WTC11 (cell line): ENCODE measurements at regions of chr7 and their contacts with region 1.

Region 1: GRCh38 chr7:106009403-106010226 is 46.6 kb downstream of the CDHR3 start:
- DNase-seq: peak; percentile 95
- ATAC-seq: peak; percentile 94
- H3K4me3 Mint-ChIP-seq: peak overlapping the region; percentile 56
- H3K27ac Mint-ChIP-seq: peak overlapping the region; percentile 98
- H3K4me1 Mint-ChIP-seq: peaks cover 20% of the 10 kb centered on the region
- H3K27me3 Mint-ChIP-seq: peaks cover 30% of the 10 kb centered on the region
- CTCF ChIP-seq: peak; percentile 97

Region 2: DNA sequence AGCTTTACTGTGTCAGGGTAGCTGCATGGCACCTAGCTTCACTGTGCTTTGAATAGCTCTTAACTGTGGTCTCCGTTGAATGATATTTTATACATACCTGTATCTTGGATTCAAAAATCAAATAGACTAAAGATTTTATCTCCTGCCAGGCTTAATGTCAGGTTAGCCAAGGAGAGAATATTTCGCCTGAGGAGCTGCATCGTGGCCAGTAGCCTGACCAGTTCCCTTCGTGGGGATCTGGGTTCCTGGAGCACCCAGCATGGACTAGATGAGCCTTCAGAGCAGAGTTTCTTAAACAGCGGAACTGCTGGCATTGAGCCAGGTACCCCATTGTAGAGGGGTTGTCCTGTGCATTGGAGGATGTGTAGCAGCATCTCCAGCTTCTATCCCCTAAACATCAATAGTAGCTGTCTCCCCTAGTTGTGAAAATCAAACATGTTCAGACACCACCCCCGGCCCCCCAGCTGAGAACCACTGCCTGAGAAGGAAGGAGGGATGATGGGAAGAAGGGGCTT is 10.4 kb before region 1 on chr7:
- CTCF ChIA-PET with region 1: interaction called, 13 read pairs
- POLR2A ChIA-PET with region 1: no interaction called
- DNase-seq: no peak
- ATAC-seq: no peak
- H3K4me3 Mint-ChIP-seq: no peak overlapping the region
- H3K27ac Mint-ChIP-seq: no peak overlapping the region
- H3K4me1 Mint-ChIP-seq: peaks cover 20% of the 10 kb centered on the region
- H3K27me3 Mint-ChIP-seq: peaks cover 5% of the 10 kb centered on the region; the same call in 1 of the 2 replicates
- CTCF ChIP-seq: no peak

Region 3: DNA sequence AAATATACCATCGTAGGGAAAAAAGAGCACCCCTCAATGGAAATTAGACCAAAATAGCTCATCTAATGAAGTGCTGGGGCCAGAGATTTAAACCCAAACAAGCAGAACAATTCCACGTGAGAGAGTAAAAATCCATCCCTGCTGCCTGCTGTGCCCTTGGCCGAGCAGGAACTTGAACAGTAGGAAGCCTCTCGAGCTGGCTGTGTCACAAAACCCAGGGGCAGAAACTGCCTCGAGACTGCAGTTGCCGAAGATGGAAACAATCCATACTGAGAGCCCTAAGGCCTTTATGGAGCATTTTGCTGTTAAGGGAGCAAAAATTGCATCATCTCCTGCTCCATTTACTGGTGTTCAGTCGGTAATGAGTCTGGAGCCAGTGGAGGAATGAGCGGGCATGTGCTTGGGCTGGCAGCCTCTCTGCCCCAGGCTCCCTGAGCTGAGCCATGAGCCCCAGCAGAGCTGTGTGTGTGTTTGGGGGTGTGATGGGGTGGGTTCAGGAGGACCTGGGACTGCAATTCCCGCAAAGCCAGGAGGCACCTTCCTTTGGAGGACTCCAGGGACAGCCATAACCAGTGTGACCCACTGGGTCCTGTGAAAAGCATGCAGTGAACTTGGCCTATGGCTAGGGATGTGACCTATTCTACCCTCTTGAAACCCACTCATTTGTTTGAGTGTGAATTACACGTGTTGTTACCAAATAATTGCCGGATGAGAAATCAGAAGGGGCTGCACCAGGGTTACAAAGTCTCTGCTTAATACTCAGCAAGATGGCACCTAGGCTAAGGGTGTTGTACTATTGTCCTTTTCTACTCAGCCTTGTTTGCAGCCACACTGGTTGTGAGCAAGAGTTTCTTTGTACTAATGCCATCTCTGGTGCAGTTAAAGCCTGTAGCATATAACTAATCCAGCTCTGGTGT is 11.8 kb after region 1 on chr7:
- CTCF ChIA-PET with region 1: interaction called, 10 read pairs
- POLR2A ChIA-PET with region 1: interaction called, 3 read pairs
- DNase-seq: peak; percentile 30
- ATAC-seq: peak; percentile 74
- H3K4me3 Mint-ChIP-seq: no peak overlapping the region
- H3K27ac Mint-ChIP-seq: peak overlapping the region; percentile 39; the same call in 1 of the 2 replicates
- H3K4me1 Mint-ChIP-seq: peaks cover 35% of the 10 kb centered on the region
- H3K27me3 Mint-ChIP-seq: no peaks in the 10 kb centered on the region; the same call in 1 of the 2 replicates
- CTCF ChIP-seq: no peak

Region 4: DNA sequence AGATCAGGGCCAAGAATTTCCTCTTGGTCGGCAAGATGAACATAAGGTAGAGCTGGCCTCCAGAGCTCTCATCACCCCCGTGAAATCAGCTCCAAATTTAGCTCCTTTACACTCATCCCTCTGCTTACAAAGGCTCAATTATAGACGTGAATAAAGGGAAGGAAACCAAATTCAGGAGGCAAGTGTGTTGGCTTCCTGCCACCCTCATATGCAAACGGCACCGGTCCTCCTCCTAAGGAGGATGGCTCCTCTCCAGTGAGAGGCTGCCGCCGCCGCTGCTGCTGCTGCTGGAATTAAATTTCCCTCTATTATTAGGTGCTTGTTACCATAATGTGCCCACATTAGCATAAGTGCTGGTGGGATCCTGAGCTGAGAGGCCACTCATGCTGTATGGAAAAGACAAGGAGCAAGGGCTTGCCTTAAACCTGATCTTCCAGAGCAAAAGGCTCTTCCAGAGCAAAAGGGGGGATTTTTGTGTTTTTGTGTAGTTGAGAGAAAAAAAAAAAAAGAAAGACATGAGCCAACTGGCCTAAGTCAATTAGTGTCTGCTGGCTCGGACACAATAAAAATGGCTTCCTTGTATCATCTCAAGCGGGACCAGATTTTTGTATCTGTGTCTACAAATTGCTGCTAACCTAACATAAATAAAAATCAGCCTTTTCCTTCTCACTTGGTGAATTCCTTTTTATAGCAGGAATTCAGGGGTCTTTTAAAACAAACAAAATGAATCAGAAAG is 21.9 kb after region 1 on chr7:
- CTCF ChIA-PET with region 1: interaction called, 22 read pairs
- POLR2A ChIA-PET with region 1: no interaction called
- DNase-seq: no peak
- ATAC-seq: peak; percentile 58
- H3K4me3 Mint-ChIP-seq: no peak overlapping the region; the same call in 1 of the 2 replicates
- H3K27ac Mint-ChIP-seq: peak overlapping the region; percentile 89
- H3K4me1 Mint-ChIP-seq: peaks cover 43% of the 10 kb centered on the region
- H3K27me3 Mint-ChIP-seq: 0 out of 2 replicates have a peak, but pooled peaks cover 3% of the 10 kb centered on the region
- CTCF ChIP-seq: no peak

Region 5: GRCh38 chr7:106273009-106273668 is 263.5 kb after region 1 on chr7:
- CTCF ChIA-PET with region 1: no interaction called
- POLR2A ChIA-PET with region 1: no interaction called
- DNase-seq: no peak
- ATAC-seq: no peak
- H3K4me3 Mint-ChIP-seq: no peak overlapping the region
- H3K27ac Mint-ChIP-seq: no peak overlapping the region
- H3K4me1 Mint-ChIP-seq: no peaks in the 10 kb centered on the region
- H3K27me3 Mint-ChIP-seq: no peaks in the 10 kb centered on the region
- CTCF ChIP-seq: no peak